Uterus (tissue), 4 donors: ENCODE measurements at regions of chr12 and their contacts with region 1.

Region 1: DNA sequence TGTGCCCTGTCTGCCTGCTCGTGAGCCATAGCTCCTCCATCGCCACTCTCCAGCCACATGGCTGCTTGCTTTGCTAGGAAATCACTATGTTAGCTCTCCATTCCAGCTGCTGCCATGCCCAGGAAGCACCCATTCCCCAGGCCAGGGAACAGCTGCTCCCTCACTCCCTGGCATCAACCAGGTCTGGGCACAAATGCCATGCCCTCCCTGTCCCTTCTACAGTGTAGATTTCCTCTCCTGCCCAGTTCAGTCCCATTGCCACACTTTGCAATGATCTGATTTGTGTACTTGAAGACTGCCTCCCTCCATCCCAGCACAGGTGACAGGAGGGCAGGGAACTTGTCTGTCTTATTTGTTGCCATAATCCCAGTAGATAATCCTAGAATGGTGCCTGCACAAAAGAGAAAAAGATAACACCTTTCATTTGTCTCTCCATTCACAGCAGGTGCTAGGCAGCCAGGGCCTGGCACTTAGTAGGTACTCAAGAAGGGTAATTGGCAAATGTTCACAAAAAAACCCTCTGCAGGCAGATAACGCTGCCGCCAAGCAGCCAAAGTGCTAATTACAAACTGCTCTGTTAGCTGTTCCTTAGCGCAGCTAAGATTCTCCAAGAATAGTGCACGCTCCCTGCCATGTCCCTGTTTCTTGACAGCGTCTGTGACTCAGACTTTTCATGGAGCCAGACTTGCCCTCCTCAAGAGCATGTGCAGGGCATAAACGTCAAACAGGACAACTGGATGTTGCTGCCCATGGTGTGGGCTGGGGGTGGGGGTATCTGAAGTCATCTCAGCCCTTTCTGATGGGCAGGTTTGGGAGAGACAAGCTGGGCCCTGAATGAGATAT is 69.1 kb downstream of the ARL6IP4 start:
- DNase-seq: no peak
- H3K4me3 ChIP-seq: no peak overlapping the region
- H3K27ac ChIP-seq: peak overlapping the region; percentile 43 to 59
- H3K4me1 ChIP-seq: peaks cover 0 to 8% of the 10 kb centered on the region in 2 donors
- H3K27me3 ChIP-seq: no peaks in the 10 kb centered on the region
- CTCF ChIP-seq: no peak
- POLR2A ChIP-seq: no peak

Region 2: DNA sequence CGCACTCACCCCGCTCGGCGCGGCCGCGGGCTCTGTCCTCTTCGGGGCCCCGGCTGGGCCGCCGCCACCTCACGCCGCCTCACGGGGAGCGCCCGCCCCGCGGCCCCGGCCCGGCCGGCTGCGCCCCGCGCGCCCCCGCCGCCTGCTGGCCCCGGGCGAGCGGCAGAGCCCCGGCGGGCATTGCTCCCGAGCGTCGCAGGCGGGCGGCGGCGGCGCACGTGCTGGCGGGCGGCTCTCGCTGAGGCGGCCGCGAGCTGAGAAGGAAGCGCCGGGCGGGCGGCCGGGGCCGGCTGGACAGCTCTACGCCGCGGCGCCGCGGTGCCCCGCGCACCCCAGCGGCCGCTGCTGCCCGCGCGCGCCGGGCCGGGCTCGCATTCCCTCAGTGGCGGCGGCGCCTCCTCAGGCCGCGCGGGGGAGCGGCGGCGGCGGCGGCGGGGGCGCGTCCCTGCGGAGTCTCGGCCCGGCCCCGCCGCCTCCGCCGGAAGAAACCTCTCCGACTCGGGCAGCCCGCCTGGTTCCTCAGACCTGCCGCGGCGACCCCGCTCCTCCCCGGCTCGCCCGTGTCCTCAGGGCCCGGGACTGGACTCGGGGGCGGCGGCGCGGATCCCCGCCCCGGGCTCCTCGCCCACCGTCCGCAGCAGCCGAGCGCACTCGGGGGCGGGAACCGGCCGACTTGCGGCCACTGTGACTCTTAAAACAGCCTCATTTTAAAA is 101.3 kb after region 1 on chr12 and contains the start of gene PITPNM2:
- intact Hi-C with region 1: loop called (anchors 5 kb)
- DNase-seq: peak; percentile 45 to 71
- H3K4me3 ChIP-seq: peak within 1 kb of the TSS; percentile 75 to 92
- H3K27ac ChIP-seq: peak within 1 kb of the TSS; percentile 88 to 98
- H3K4me1 ChIP-seq: no peaks in the 10 kb centered on the region
- H3K27me3 ChIP-seq: no peaks in the 10 kb centered on the region
- CTCF ChIP-seq: peak in 3 of 4 experiments; percentile 33 to 85 (median 73)
- POLR2A ChIP-seq: peak in 1 of 2 donors; percentile 20
- total RNA-seq, gene PITPNM2: 0.59 to 35.1 (median 4.2) TPM

Region 3: GRCh38 chr12:123502163-123502704 is 452.6 kb after region 1 on chr12:
- intact Hi-C with region 1: no loop called
- DNase-seq: no peak
- H3K4me3 ChIP-seq: no peak overlapping the region
- H3K27ac ChIP-seq: no peak overlapping the region
- H3K4me1 ChIP-seq: no peaks in the 10 kb centered on the region
- H3K27me3 ChIP-seq: no peaks in the 10 kb centered on the region
- CTCF ChIP-seq: no peak
- POLR2A ChIP-seq: no peak